ENCODE measurements at regions of chr12 and their contacts with region 1.

Region 1: DNA sequence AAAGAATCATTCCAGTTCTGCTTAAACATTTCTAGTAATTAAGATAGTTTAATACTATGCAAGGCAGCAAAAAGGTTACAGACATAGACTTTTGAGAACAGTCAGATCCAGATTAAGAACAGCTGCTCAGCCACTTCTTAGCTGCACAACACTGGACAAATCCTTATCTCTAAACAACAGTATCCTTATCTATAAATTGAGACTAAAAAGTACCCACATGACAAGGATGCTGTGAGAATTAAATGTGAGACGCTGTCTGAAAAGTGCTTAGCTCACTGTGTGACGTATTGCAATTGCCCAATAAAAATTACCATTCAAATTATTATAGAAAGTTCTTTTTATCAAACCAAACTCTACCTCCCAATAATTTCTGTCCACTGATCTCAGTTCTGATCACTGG is 35.5 kb downstream of the BORCS5 start:
- DNase-seq: no peak
- H3K4me3 ChIP-seq: no peak overlapping the region
- H3K27ac ChIP-seq: no peak overlapping the region
- H3K4me1 ChIP-seq: peaks cover 8% of the 10 kb centered on the region
- H3K27me3 ChIP-seq: no peaks in the 10 kb centered on the region
- CTCF ChIP-seq: no peak

Region 2: GRCh38 chr12:12645485-12645884 is 253.1 kb after region 1 on chr12:
- CTCF ChIA-PET with region 1: interaction called, 11 read pairs
- POLR2A ChIA-PET with region 1: no interaction called
- intact Hi-C with region 1: no loop called
- DNase-seq: no peak
- H3K4me3 ChIP-seq: no peak overlapping the region
- H3K27ac ChIP-seq: no peak overlapping the region
- H3K4me1 ChIP-seq: no peaks in the 10 kb centered on the region
- H3K27me3 ChIP-seq: no peaks in the 10 kb centered on the region
- CTCF ChIP-seq: peak; percentile 54

Measured in PC-9 (cell line).